ENCODE measurements at regions of chr1 and their contacts with region 1.

Region 1: GRCh38 chr1:231337472-231338269 is at the start of gene EXOC8:
- DNase-seq: peak; percentile 95 to 99 (median 99)
- H3K4me3 ChIP-seq: peak within 1 kb of the TSS; percentile 100
- H3K4me3 Mint-ChIP-seq: peak within 1 kb of the TSS; percentile 98 to 100 (median 100)
- H3K27ac ChIP-seq: peak within 1 kb of the TSS; percentile 99
- H3K27ac Mint-ChIP-seq: peak within 1 kb of the TSS; percentile 99 to 100 (median 100)
- H3K4me1 ChIP-seq: peaks cover 56% of the 10 kb centered on the region
- H3K4me1 Mint-ChIP-seq: peaks cover 65 to 83% (median 80%) of the 10 kb centered on the region in 3 donors
- H3K27me3 ChIP-seq: no peaks in the 10 kb centered on the region
- H3K27me3 Mint-ChIP-seq: peaks cover 0 to 8% of the 10 kb centered on the region in 2 donors
- total RNA-seq, gene EXOC8: 16.8 to 16.9 TPM

Region 2: DNA sequence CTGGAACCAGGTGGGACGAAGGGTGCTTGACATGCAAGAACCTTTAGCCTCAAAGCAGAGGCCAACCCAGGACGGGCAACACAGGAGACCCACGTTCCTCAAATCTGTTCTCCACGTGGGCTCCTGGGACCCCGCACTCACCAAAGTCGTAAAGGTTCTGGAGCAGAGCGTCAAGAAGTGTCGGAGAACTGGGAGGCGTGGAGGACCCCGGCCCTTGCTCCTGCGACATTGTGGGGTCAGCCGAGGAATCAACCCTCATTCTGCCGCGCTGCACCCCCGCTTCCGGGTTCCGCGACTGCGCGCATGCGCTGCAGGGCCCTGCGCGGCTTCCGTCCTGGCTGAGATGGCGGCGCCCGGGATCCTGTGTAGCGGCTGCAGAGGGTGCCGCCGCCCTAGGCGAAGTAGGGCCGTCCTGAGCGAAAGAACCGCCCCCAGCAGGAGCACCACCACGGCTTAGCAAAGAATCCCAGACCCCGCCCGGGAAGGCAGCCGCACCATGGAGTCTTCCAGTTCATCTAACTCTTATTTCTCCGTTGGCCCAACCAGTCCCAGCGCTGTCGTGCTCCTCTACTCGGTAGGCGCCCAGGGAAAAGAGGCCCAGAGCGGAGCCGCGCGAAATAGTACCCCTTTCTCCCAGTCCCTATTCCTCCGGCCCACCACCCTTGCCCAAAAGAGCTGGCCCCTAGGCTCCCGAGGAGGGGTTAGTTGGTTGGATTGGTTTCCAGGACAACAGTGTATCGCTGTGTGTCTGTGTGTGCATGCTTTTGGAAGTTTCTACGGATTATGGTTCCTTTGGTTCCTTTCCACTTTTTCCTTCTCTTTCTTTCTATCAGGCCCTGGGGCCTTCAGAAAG is 96.6 kb before region 1 on chr1 and contains the start of gene GNPAT:
- CTCF ChIA-PET with region 1: interaction called, 3 read pairs
- POLR2A ChIA-PET with region 1: interaction called, 12 read pairs
- DNase-seq: peak; percentile 89 to 93 (median 91)
- H3K4me3 ChIP-seq: peak within 1 kb of the TSS; percentile 100
- H3K4me3 Mint-ChIP-seq: peak within 1 kb of the TSS; percentile 91 to 100 (median 97)
- H3K27ac ChIP-seq: peak within 1 kb of the TSS; percentile 88
- H3K27ac Mint-ChIP-seq: peak within 1 kb of the TSS; percentile 95 to 100 (median 96)
- H3K4me1 ChIP-seq: peaks cover 54% of the 10 kb centered on the region
- H3K4me1 Mint-ChIP-seq: peaks cover 63 to 83% (median 81%) of the 10 kb centered on the region in 3 donors
- H3K27me3 ChIP-seq: no peaks in the 10 kb centered on the region
- H3K27me3 Mint-ChIP-seq: peaks cover 0 to 4% of the 10 kb centered on the region in 2 donors
- total RNA-seq, gene GNPAT: 49.2 to 51.8 TPM

Region 3: DNA sequence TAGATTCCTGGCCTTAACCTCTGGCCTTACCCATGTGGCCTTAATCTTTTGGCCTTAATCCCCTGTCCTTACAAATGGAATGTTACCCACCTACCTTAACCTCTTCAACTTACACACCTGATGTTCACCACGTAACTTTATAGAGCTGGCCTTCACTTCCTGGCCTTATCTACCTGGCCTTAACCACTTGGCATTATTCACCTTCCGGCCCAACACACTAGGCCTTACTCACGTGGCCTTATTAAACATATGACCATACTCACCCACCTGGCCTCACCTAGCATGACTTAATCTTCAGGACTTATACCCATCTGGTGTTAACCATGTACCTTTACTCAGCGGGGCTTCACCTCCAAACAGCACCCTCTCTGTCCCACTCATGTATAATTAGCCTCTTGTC is 41.7 kb before region 1 on chr1:
- CTCF ChIA-PET with region 1: no interaction called
- POLR2A ChIA-PET with region 1: no interaction called
- DNase-seq: no peak
- H3K4me3 ChIP-seq: no peak overlapping the region
- H3K4me3 Mint-ChIP-seq: no peak overlapping the region
- H3K27ac ChIP-seq: no peak overlapping the region
- H3K27ac Mint-ChIP-seq: no peak overlapping the region
- H3K4me1 ChIP-seq: no peaks in the 10 kb centered on the region
- H3K4me1 Mint-ChIP-seq: no peaks in the 10 kb centered on the region
- H3K27me3 ChIP-seq: no peaks in the 10 kb centered on the region
- H3K27me3 Mint-ChIP-seq: peaks cover 0 to 2% of the 10 kb centered on the region in 2 donors

Region 4: GRCh38 chr1:231421993-231422764 is 84.5 kb after region 1 on chr1 and contains the start of gene EGLN1:
- CTCF ChIA-PET with region 1: interaction called, 5 read pairs
- POLR2A ChIA-PET with region 1: interaction called, 25 read pairs
- DNase-seq: peak; percentile 70 to 86 (median 81)
- H3K4me3 ChIP-seq: peak within 1 kb of the TSS; percentile 77
- H3K4me3 Mint-ChIP-seq: peak within 1 kb of the TSS; percentile 88 to 99 (median 98)
- H3K27ac ChIP-seq: peak within 1 kb of the TSS; percentile 77
- H3K27ac Mint-ChIP-seq: peak within 1 kb of the TSS; percentile 61 to 97 (median 90)
- H3K4me1 ChIP-seq: peaks cover 30% of the 10 kb centered on the region
- H3K4me1 Mint-ChIP-seq: peaks cover 41 to 46% (median 45%) of the 10 kb centered on the region in 3 donors
- H3K27me3 ChIP-seq: no peaks in the 10 kb centered on the region
- H3K27me3 Mint-ChIP-seq: peaks cover 0 to 7% of the 10 kb centered on the region in 2 donors
- total RNA-seq, gene EGLN1: 21.0 to 24.2 TPM

Region 5: GRCh38 chr1:231528172-231529029 is 190.7 kb after region 1 on chr1 and contains the start of gene TSNAX:
- CTCF ChIA-PET with region 1: interaction called, 8 read pairs
- POLR2A ChIA-PET with region 1: interaction called, 16 read pairs
- DNase-seq: peak; percentile 84 to 94 (median 92)
- H3K4me3 ChIP-seq: peak within 1 kb of the TSS; percentile 77
- H3K4me3 Mint-ChIP-seq: peak within 1 kb of the TSS; percentile 94 to 99 (median 97)
- H3K27ac ChIP-seq: peak within 1 kb of the TSS; percentile 95
- H3K27ac Mint-ChIP-seq: peak within 1 kb of the TSS; percentile 95 to 100 (median 100)
- H3K4me1 ChIP-seq: peaks cover 36% of the 10 kb centered on the region
- H3K4me1 Mint-ChIP-seq: peaks cover 39 to 53% (median 52%) of the 10 kb centered on the region in 3 donors
- H3K27me3 ChIP-seq: no peaks in the 10 kb centered on the region
- H3K27me3 Mint-ChIP-seq: no peaks in the 10 kb centered on the region
- total RNA-seq, gene TSNAX: 48.0 to 49.8 TPM